Naive thymus-derived CD4-positive, alpha-beta T cell (primary cell): ENCODE measurements at regions of chr12 and their contacts with region 1.

Region 1: GRCh38 chr12:104303538-104304151 is at the start of gene EID3:
- DNase-seq: peak; percentile 86 to 96 (median 91)
- ATAC-seq: peak; percentile 99
- H3K4me3 ChIP-seq: peak within 1 kb of the TSS; percentile 56
- H3K4me3 Mint-ChIP-seq: peak within 1 kb of the TSS; percentile 87 to 99 (median 96)
- H3K27ac ChIP-seq: peak within 1 kb of the TSS; percentile 84
- H3K27ac Mint-ChIP-seq: peak within 1 kb of the TSS; percentile 91 to 99 (median 97)
- H3K4me1 ChIP-seq: peaks cover 7 to 24% of the 10 kb centered on the region in 2 donors
- H3K4me1 Mint-ChIP-seq: peaks cover 35 to 72% (median 56%) of the 10 kb centered on the region in 7 donors
- H3K27me3 ChIP-seq: no peaks in the 10 kb centered on the region
- H3K27me3 Mint-ChIP-seq: no peaks in the 10 kb centered on the region
- total RNA-seq, gene EID3: 8.2 to 11.8 (median 10.4) TPM

Region 2: DNA sequence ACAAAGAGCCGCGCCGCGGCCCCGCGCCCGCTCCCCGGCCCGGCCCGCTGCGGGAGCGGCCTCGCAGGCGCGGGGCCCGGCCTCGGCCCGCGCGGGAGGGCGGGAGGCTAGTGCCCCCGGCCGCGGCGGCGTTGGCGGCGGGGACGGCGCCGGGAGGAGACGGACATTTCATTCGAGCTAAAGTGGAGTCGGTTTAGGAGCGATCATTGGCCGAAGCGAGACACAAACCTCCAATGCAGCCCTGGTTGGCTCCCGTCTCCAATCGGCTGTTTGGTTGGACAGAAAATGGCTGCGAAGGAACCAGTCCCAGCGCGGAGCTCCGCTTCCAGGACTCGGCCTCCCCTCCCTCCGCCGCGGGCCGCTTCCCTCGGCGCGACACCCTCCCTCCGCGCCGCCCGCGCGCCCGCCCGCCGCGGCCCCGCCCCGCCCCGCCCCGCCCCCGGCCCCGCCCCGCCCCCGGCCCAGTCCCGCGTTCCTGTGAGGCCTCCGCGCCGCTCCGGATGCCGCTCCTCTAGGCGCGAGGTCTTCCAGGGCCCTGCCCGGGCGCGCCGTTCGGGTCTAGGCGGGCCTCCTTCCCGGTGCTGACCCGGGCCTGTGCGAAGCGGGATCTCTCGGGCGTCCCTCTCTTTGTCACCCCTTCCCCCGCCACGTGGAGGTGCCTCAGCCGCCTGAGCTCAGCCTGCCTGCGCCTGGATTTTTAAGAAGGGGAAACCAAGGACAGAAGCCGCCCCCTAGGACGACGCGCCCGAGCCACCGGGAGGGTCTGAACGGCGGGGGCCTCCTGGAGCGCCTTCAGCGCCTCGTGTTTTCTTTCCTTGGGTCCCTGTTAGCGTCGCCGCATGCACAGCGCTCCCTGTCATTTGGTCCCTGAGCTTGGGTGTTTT is 165.5 kb before region 1 on chr12 and contains the start of gene NFYB:
- CTCF ChIA-PET with region 1: no interaction called
- POLR2A ChIA-PET with region 1: no interaction called
- intact Hi-C with region 1: loop called (anchors 1 to 5 kb)
- DNase-seq: peak; percentile 90 to 96 (median 94)
- ATAC-seq: peak; percentile 97
- H3K4me3 ChIP-seq: peak within 1 kb of the TSS; percentile 69
- H3K4me3 Mint-ChIP-seq: peak within 1 kb of the TSS; percentile 81 to 93 (median 90)
- H3K27ac ChIP-seq: peak within 1 kb of the TSS; percentile 72
- H3K27ac Mint-ChIP-seq: peak within 1 kb of the TSS; percentile 71 to 95 (median 89)
- H3K4me1 ChIP-seq: peaks cover 10 to 23% of the 10 kb centered on the region in 2 donors
- H3K4me1 Mint-ChIP-seq: peaks cover 0 to 22% (median 9%) of the 10 kb centered on the region in 7 donors
- H3K27me3 ChIP-seq: no peaks in the 10 kb centered on the region
- H3K27me3 Mint-ChIP-seq: peaks cover 0 to 24% (median 0%) of the 10 kb centered on the region in 5 donors
- total RNA-seq, gene NFYB: 11.6 to 25.9 (median 24.4) TPM

Region 3: DNA sequence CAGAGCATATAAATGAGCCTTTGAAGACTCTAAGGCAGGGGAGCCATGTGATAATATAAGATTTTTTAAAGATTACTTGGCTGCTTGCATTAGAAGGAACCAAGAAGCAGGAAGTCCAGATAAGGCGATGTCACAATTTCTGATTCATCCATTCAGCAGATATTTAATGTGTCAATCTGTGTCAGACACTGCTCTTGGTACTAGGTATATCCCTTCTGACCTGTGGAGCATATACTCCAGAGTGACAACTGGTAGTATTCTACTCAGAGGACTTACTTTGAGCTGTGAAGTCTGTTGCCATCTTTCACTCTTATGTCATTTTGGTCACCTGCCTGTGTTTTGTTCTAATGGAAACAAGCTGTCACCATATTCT is 10.6 kb after region 1 on chr12:
- CTCF ChIA-PET with region 1: no interaction called
- POLR2A ChIA-PET with region 1: interaction called, 11 read pairs
- intact Hi-C with region 1: no loop called
- DNase-seq: no peak
- ATAC-seq: peak; percentile 51
- H3K4me3 ChIP-seq: no peak overlapping the region
- H3K4me3 Mint-ChIP-seq: no peak overlapping the region
- H3K27ac ChIP-seq: no peak overlapping the region
- H3K27ac Mint-ChIP-seq: no peak overlapping the region
- H3K4me1 ChIP-seq: no peaks in the 10 kb centered on the region
- H3K4me1 Mint-ChIP-seq: peaks cover 0 to 22% (median 6%) of the 10 kb centered on the region in 7 donors
- H3K27me3 ChIP-seq: no peaks in the 10 kb centered on the region
- H3K27me3 Mint-ChIP-seq: no peaks in the 10 kb centered on the region